ENCODE measurements at regions of chr12 and their contacts with region 1.

Region 1: DNA sequence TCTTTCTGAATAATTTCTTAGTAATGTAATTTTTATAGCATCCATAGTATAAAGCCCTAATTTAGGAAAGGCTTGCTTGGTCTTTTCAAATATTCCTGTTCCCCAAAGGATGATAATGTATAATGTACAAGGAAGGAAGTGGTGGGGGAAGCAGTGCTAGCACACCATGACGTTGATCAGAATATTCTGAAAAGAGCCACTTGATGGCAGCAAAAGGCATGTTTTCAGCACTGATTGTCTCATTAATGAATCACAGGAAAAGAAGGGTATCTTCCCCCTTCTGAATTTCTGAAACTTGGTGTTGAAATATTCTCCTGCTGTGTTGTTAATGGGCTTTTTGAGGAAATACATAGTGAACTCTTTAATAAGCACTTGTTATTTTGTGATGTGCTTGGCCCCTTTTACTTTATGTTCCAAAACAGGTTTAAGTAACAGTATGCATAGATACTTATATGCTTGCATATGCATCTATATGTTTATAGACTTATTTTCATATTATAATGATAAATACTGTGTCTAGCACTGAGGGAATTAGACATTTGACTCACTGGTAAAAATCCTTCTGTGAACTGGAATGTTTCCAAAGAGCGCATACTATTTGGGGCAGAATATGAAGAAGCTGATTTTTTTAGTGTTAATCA is 122.0 kb downstream of the TMEM117 start:
- DNase-seq: peak; percentile 54
- H3K4me3 Mint-ChIP-seq: no peak overlapping the region
- H3K27ac Mint-ChIP-seq: no peak overlapping the region
- H3K4me1 Mint-ChIP-seq: peaks cover 2% of the 10 kb centered on the region
- H3K27me3 Mint-ChIP-seq: no peaks in the 10 kb centered on the region

Region 2: GRCh38 chr12:43599071-43599470 is 358.8 kb before region 1 on chr12:
- CTCF ChIA-PET with region 1: no interaction called
- intact Hi-C with region 1: no loop called
- DNase-seq: no peak
- H3K4me3 Mint-ChIP-seq: no peak overlapping the region
- H3K27ac Mint-ChIP-seq: no peak overlapping the region
- H3K4me1 Mint-ChIP-seq: no peaks in the 10 kb centered on the region
- H3K27me3 Mint-ChIP-seq: no peaks in the 10 kb centered on the region

Region 3: DNA sequence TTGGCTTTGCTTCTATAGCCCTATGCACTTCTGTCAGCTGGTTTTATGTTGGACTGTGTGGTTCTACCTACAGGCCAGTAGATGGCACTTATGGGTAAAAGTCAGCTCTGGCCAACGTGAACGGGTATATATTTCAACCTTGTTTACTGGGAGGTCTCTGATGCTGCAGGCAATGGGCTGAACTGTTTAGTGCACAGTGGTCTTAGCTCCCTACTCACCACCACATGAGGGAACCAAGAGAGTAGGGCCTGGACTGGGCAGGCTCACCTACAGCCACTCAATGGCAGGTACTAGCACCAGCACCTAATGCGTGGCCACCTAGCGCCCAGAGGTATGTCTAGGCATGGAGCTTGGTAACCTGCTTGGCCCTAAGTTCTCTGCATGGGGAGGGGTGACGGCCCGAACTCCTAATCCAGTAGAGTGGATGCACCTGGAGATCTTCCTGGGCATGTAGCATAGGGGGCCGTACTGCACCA is 359.8 kb after region 1 on chr12:
- CTCF ChIA-PET with region 1: no interaction called
- intact Hi-C with region 1: loop called (anchors 5 kb)
- DNase-seq: no peak
- H3K4me3 Mint-ChIP-seq: no peak overlapping the region
- H3K27ac Mint-ChIP-seq: no peak overlapping the region
- H3K4me1 Mint-ChIP-seq: no peaks in the 10 kb centered on the region
- H3K27me3 Mint-ChIP-seq: no peaks in the 10 kb centered on the region

Region 4: GRCh38 chr12:44774815-44775411 is 817.1 kb after region 1 on chr12:
- CTCF ChIA-PET with region 1: no interaction called
- intact Hi-C with region 1: loop called (anchors 10 kb)
- DNase-seq: peak; percentile 75
- H3K4me3 Mint-ChIP-seq: no peak overlapping the region
- H3K27ac Mint-ChIP-seq: no peak overlapping the region
- H3K4me1 Mint-ChIP-seq: peaks cover 8% of the 10 kb centered on the region
- H3K27me3 Mint-ChIP-seq: no peaks in the 10 kb centered on the region

Region 5: DNA sequence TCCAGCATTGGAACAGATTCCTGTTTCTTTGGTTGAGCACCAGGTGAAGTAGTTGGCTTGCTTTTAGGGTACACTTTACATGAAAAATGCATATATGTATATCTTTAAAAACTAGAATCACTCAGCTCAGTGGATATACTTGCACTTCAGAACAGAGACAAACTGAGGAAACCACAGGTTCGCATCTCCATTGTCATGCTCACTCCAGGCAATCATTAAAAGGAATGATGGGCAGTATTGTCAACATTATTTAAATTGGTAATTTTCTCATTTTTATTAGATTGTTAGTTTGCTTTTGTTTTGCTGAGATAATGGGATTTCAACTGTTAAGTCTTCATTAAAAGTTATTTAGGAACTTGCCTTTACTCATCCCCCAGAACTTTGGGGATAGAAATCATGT is 989.3 kb after region 1 on chr12:
- CTCF ChIA-PET with region 1: no interaction called
- intact Hi-C with region 1: loop called (anchors 5 kb)
- DNase-seq: no peak
- H3K4me3 Mint-ChIP-seq: no peak overlapping the region
- H3K27ac Mint-ChIP-seq: no peak overlapping the region
- H3K4me1 Mint-ChIP-seq: peaks cover 2% of the 10 kb centered on the region
- H3K27me3 Mint-ChIP-seq: peaks cover 4% of the 10 kb centered on the region